ENCODE measurements at regions of chr17 and their contacts with region 1.

Region 1: GRCh38 chr17:64145757-64146417 is 15.9 kb upstream of the ERN1 start:
- DNase-seq: peak; percentile 91 to 99 (median 95)
- ATAC-seq: peak; percentile 88
- H3K4me3 ChIP-seq: peak overlapping the region; percentile 78
- H3K4me3 Mint-ChIP-seq: no peak overlapping the region
- H3K27ac ChIP-seq: peak overlapping the region; percentile 73 to 91
- H3K27ac Mint-ChIP-seq: no peak overlapping the region
- H3K4me1 ChIP-seq: peaks cover 21% of the 10 kb centered on the region
- H3K4me1 Mint-ChIP-seq: peaks cover 19% of the 10 kb centered on the region
- H3K27me3 ChIP-seq: no peaks in the 10 kb centered on the region
- H3K27me3 Mint-ChIP-seq: no peaks in the 10 kb centered on the region
- CTCF ChIP-seq: no peak

Region 2: DNA sequence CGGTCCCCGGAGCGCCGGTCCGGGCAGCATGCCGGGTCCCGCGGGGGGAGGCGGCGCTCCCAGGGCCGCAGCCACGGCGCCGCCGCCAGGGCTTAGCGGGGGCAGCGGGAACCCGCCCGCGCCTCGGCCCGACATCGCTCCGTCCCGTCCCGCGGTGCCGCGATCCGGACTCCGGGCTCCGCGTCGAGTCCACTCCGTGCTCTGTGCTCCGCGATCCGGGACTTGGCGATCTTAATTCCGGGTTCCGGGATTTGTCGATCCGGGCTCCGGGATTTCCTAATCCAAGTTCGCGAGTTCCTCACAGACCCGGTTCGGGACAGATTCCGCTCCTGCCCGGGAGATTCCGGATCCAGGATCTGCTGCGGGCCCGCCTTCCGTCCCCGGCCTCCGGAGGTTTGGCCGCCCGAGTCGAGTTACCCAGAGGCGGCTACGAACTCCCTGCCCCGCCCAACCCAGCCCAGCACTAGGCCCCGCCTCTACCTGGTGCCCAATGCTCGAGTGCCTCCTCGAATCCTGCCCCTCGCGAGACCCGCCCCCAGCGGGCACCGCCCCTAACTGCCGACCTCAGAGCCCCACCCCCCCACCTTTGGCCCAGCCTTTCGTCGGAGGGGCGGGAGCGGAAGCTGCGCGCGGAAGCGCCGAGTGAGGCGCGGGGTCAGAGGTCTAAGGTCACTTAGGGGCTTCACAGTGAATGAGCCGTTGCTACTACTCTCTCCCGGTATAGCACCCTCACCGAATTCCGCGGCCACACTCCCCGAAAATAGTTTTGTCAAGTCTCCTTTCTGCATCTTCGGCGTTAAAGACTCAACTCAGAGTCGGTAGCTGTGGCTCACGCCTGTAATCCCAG is 303.1 kb before region 1 on chr17 and contains the start of gene SMARCD2:
- CTCF ChIA-PET with region 1: no interaction called
- POLR2A ChIA-PET with region 1: interaction called, 7 read pairs
- intact Hi-C with region 1: loop called (anchors 1 to 10 kb)
- DNase-seq: peak; percentile 98 to 100 (median 99)
- ATAC-seq: peak; percentile 88
- H3K4me3 ChIP-seq: peak within 1 kb of the TSS; percentile 85
- H3K4me3 Mint-ChIP-seq: peak within 1 kb of the TSS; percentile 94
- H3K27ac ChIP-seq: peak within 1 kb of the TSS; percentile 85 to 93
- H3K27ac Mint-ChIP-seq: peak within 1 kb of the TSS; percentile 91
- H3K4me1 ChIP-seq: peaks cover 57% of the 10 kb centered on the region
- H3K4me1 Mint-ChIP-seq: peaks cover 50% of the 10 kb centered on the region
- H3K27me3 ChIP-seq: no peaks in the 10 kb centered on the region
- H3K27me3 Mint-ChIP-seq: no peaks in the 10 kb centered on the region
- CTCF ChIP-seq: no peak
- total RNA-seq, gene SMARCD2: 102 to 111 TPM

Region 3: DNA sequence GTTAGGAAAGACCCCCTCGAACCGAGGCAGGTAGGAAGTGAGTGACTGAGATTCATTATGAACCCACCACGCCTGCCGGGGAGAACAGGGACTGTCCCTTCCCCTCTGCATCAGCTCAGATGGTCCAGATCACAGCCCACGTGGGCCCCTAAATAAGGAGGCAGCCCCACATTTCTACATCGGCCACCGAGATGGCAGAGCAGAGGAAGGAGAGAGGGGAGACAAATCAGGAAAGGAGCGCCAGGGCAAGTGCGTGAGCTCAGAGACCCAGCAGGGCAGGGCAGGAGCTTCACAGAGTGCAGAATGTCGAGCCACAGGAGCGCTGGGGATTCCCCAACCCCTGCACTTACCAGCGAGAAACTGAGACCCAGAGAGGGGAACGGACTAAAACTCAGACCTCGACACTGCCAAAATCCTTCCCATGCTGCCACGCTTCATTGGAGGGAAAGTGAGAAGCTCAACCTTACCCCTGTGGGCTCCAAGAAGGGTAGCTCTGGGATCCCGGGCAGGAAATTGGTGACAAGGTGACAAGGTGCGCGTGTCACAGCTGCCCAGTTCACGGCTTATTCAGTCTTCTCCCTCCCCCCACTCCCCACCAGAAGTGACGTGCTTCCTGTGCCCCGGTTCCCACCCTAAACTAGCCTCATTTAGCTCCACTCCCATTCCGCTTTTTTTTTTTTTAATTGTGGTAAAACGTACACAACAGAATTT is 125.7 kb before region 1 on chr17 and contains the start of gene ICAM2:
- CTCF ChIA-PET with region 1: interaction called, 9 read pairs
- POLR2A ChIA-PET with region 1: interaction called, 116 read pairs
- intact Hi-C with region 1: no loop called
- DNase-seq: peak; percentile 82 to 99 (median 86)
- ATAC-seq: peak; percentile 69
- H3K4me3 ChIP-seq: peak within 1 kb of the TSS; percentile 97
- H3K4me3 Mint-ChIP-seq: peak within 1 kb of the TSS; percentile 99
- H3K27ac ChIP-seq: peak within 1 kb of the TSS; percentile 98 to 99
- H3K27ac Mint-ChIP-seq: peak within 1 kb of the TSS; percentile 100
- H3K4me1 ChIP-seq: peaks cover 70% of the 10 kb centered on the region
- H3K4me1 Mint-ChIP-seq: peaks cover 82% of the 10 kb centered on the region
- H3K27me3 ChIP-seq: no peaks in the 10 kb centered on the region
- H3K27me3 Mint-ChIP-seq: no peaks in the 10 kb centered on the region
- CTCF ChIP-seq: no peak
- total RNA-seq, gene ICAM2: 50.6 to 54.7 TPM

Region 4: GRCh38 chr17:64063766-64064224 is 82.1 kb before region 1 on chr17:
- CTCF ChIA-PET with region 1: interaction called, 6 read pairs
- POLR2A ChIA-PET with region 1: interaction called, 58 read pairs
- intact Hi-C with region 1: no loop called
- DNase-seq: peak; percentile 36 to 81 (median 58)
- ATAC-seq: peak; percentile 53
- H3K4me3 ChIP-seq: peak overlapping the region; percentile 47
- H3K4me3 Mint-ChIP-seq: peak overlapping the region; percentile 82
- H3K27ac ChIP-seq: no peak overlapping the region
- H3K27ac Mint-ChIP-seq: peak overlapping the region; percentile 80
- H3K4me1 ChIP-seq: peaks cover 91% of the 10 kb centered on the region
- H3K4me1 Mint-ChIP-seq: peaks cover 85% of the 10 kb centered on the region
- H3K27me3 ChIP-seq: no peaks in the 10 kb centered on the region
- H3K27me3 Mint-ChIP-seq: no peaks in the 10 kb centered on the region
- CTCF ChIP-seq: peak; percentile 60

Region 5: GRCh38 chr17:64129764-64130558 is 15.9 kb before region 1 on chr17 and contains the start of gene ERN1:
- CTCF ChIA-PET with region 1: interaction called, 13 read pairs
- POLR2A ChIA-PET with region 1: interaction called, 166 read pairs
- intact Hi-C with region 1: loop called in 1 of 2 experiments (anchors 1 kb)
- DNase-seq: peak; percentile 85 to 95 (median 91)
- ATAC-seq: peak; percentile 86
- H3K4me3 ChIP-seq: peak within 1 kb of the TSS; percentile 89
- H3K4me3 Mint-ChIP-seq: peak within 1 kb of the TSS; percentile 99
- H3K27ac ChIP-seq: peak within 1 kb of the TSS; percentile 88 to 96
- H3K27ac Mint-ChIP-seq: peak within 1 kb of the TSS; percentile 92
- H3K4me1 ChIP-seq: peaks cover 36% of the 10 kb centered on the region
- H3K4me1 Mint-ChIP-seq: peaks cover 57% of the 10 kb centered on the region
- H3K27me3 ChIP-seq: no peaks in the 10 kb centered on the region
- H3K27me3 Mint-ChIP-seq: no peaks in the 10 kb centered on the region
- CTCF ChIP-seq: no peak
- total RNA-seq, gene ERN1: 62.7 to 67.8 TPM

Region 6: GRCh38 chr17:64281962-64282727 is 136.3 kb after region 1 on chr17:
- CTCF ChIA-PET with region 1: interaction called, 3 read pairs
- POLR2A ChIA-PET with region 1: interaction called, 12 read pairs
- intact Hi-C with region 1: loop called (anchors 5 kb)
- DNase-seq: peak; percentile 9 to 83 (median 40)
- ATAC-seq: peak; percentile 74
- H3K4me3 ChIP-seq: no peak overlapping the region
- H3K4me3 Mint-ChIP-seq: no peak overlapping the region
- H3K27ac ChIP-seq: no peak overlapping the region
- H3K27ac Mint-ChIP-seq: no peak overlapping the region
- H3K4me1 ChIP-seq: peaks cover 3% of the 10 kb centered on the region
- H3K4me1 Mint-ChIP-seq: no peaks in the 10 kb centered on the region
- H3K27me3 ChIP-seq: no peaks in the 10 kb centered on the region
- H3K27me3 Mint-ChIP-seq: no peaks in the 10 kb centered on the region
- CTCF ChIP-seq: peak; percentile 63

Region 7: DNA sequence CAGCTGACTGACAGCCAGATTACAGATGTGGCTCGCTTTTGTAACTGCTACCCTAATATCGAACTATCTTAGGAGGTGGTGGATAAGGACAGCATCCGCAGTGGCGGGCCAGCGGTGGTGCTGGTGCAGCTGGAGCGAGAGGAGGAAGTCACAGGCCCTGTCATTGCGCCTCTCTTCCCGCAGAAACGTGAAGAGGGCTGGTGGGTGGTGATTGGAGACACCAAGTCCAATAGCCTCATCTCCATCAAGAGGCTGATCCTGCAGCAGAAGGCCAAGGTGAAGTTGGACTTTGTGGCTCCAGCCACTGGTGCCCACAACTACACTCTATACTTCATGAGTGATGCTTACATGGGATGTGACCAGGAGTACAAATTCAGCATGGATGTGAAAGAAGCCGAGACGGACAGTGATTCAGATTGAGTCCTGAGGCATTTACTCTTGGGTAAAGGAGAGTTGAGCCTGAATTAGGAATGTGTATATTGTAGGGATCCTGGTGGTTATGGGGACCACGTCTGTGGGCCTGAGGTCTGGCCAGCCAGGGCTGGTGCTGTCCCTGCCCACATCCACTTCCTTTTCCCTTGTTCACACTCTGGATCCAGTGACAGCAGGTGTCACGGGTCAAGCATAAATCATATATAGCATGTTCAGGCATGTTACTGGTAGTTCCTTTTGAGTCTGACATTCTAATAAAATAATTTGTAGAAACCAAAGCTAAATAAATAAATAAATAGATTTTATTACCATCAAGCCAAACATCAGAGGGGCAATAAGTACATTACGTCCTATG is 605.2 kb after region 1 on chr17:
- CTCF ChIA-PET with region 1: no interaction called
- POLR2A ChIA-PET with region 1: no interaction called
- intact Hi-C with region 1: no loop called
- DNase-seq: no peak
- ATAC-seq: no peak
- H3K4me3 ChIP-seq: no peak overlapping the region
- H3K4me3 Mint-ChIP-seq: no peak overlapping the region
- H3K27ac ChIP-seq: no peak overlapping the region
- H3K27ac Mint-ChIP-seq: no peak overlapping the region
- H3K4me1 ChIP-seq: no peaks in the 10 kb centered on the region
- H3K4me1 Mint-ChIP-seq: no peaks in the 10 kb centered on the region
- H3K27me3 ChIP-seq: no peaks in the 10 kb centered on the region
- H3K27me3 Mint-ChIP-seq: no peaks in the 10 kb centered on the region
- CTCF ChIP-seq: no peak

Measured in CD4-positive, alpha-beta T cell (primary cell).